GM18951 (cell line): ENCODE measurements at regions of chr1 and their contacts with region 1.

Region 1: GRCh38 chr1:85307987-85308832 is 31.8 kb upstream of the BCL10 start:
- POLR2A ChIP-seq: no peak

Region 2: GRCh38 chr1:84930329-84930728 is 377.9 kb before region 1 on chr1:
- in situ Hi-C with region 1: no loop called
- POLR2A ChIP-seq: no peak

Region 3: DNA sequence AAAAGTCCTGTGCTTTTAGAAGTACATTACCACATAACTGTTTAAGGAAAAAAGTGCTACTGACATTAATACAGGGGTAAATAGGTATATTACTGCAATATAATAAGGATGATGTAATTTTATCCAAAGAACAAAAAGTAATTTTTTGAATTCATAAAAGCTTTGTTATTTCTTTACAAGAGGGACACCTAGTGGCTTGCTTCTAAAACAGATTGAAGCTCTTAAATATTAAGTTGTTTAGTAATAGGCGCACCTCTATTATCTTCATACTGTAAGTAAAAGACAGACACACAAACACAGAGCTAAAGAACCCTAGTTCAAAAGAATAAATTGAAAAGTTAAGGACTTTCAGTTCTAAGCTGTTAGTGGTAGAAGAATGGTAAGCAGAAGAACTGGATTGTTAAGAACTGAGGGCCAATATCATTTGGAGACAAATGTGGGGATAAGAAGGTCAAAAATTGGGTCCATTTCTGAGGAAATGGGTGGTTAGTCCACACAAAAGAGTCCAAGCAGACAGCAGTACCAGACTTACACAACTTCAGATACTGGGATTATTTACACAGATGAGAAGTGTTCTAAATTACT is 384.6 kb after region 1 on chr1:
- in situ Hi-C with region 1: loop called (anchors 10 kb)
- POLR2A ChIP-seq: no peak